ENCODE measurements at regions of chr10 and their contacts with region 1.

Region 1: DNA sequence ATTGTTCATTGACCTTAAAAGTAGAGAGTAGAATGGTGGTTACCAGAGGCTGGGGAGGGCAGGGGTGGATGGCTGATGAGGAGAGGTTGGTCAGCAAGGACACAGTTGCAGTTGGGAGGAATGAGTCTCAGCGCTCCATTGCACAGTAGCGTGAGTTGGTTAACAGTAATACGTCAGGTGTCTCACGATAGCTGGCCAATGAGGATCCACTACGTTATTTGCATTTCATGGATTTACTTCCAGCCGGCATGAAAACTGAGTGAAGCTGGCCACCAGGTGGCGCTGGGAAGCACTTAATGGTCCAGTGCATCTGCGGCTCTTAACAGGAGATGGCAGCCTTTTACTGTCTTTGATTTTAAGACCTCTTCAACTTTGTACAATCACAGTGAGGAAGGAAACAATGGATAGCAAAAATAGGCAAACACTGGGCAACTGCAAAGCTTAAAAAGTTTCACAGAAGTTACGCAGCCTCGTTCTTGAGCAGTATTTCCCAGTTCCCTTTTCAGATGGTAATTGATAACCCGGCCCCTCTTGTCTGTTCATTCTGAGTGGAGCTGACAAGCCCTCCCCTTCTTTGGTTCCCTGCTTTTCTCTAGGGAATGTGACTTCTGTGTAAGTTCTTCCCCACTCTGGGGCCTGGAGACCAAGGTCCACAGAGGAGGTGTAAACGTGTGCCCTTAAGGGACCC is 23.7 kb downstream of the AKR1E2 start:
- DNase-seq: peak; percentile 87
- ATAC-seq: peak; percentile 92
- H3K4me3 ChIP-seq: no peak overlapping the region
- H3K27ac ChIP-seq: peak overlapping the region; percentile 23
- H3K4me1 ChIP-seq: peaks cover 23% of the 10 kb centered on the region
- H3K27me3 ChIP-seq: no peaks in the 10 kb centered on the region
- CTCF ChIP-seq: peak; percentile 99
- EP300 ChIP-seq: peak in 1 of 2 experiments; percentile 35; a peak in 2 of 4 replicates
- POLR2A ChIP-seq: no peak
- RAD21 ChIP-seq: peak; percentile 99

Region 2: DNA sequence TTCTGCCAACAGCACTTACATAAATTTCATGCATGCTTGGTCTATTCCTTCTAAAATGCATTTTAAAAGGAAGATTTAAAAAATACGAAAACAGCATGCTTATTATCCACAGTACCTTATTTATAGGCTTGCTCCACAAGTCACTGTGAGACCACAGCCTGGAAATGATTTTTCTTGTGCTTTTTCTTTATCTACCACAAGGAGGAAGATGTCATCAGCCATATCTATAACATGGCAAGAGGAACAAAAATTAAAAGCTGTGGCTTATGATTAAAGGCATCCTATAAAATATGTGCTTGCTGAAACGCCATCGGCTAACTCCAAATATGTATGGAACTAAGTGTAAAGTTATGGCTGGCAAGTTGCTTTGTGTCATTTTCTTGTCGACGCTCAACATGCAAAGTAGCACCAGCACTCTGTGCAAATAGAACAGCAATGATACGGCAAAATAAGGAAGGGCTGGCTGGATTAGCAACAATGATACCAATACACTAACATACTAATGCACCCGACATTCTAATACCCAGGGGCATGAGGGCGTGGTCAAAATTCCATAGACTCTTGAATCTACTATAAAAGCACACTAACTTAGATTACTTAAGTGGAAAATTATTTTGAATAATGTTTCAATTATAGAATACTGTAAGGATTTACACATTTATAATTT is 64.9 kb before region 1 on chr10:
- CTCF ChIA-PET with region 1: no interaction called
- POLR2A ChIA-PET with region 1: no interaction called
- in situ Hi-C with region 1: no loop called
- intact Hi-C with region 1: no loop called
- DNase-seq: no peak
- ATAC-seq: no peak
- H3K4me3 ChIP-seq: no peak overlapping the region
- H3K27ac ChIP-seq: no peak overlapping the region
- H3K4me1 ChIP-seq: no peaks in the 10 kb centered on the region
- H3K27me3 ChIP-seq: no peaks in the 10 kb centered on the region; a peak in 3 of 5 replicates
- CTCF ChIP-seq: no peak
- EP300 ChIP-seq: no peak
- POLR2A ChIP-seq: no peak
- RAD21 ChIP-seq: no peak

Region 3: GRCh38 chr10:4947635-4948596 is 98.2 kb after region 1 on chr10:
- CTCF ChIA-PET with region 1: no interaction called
- POLR2A ChIA-PET with region 1: interaction called, 15 read pairs
- in situ Hi-C with region 1: no loop called
- intact Hi-C with region 1: no loop called
- DNase-seq: peak; percentile 100
- ATAC-seq: peak; percentile 91
- H3K4me3 ChIP-seq: peak overlapping the region in 2 of 3 experiments; percentile 5 to 36; a peak in 2 of 6 replicates
- H3K27ac ChIP-seq: peak overlapping the region; percentile 99
- H3K4me1 ChIP-seq: peaks cover 93% of the 10 kb centered on the region
- H3K27me3 ChIP-seq: no peaks in the 10 kb centered on the region
- CTCF ChIP-seq: no peak
- EP300 ChIP-seq: peak; percentile 62 to 97; a peak in 3 of 4 replicates
- POLR2A ChIP-seq: peak; percentile 4 to 65; a peak in 2 of 4 replicates
- RAD21 ChIP-seq: no peak

Region 4: DNA sequence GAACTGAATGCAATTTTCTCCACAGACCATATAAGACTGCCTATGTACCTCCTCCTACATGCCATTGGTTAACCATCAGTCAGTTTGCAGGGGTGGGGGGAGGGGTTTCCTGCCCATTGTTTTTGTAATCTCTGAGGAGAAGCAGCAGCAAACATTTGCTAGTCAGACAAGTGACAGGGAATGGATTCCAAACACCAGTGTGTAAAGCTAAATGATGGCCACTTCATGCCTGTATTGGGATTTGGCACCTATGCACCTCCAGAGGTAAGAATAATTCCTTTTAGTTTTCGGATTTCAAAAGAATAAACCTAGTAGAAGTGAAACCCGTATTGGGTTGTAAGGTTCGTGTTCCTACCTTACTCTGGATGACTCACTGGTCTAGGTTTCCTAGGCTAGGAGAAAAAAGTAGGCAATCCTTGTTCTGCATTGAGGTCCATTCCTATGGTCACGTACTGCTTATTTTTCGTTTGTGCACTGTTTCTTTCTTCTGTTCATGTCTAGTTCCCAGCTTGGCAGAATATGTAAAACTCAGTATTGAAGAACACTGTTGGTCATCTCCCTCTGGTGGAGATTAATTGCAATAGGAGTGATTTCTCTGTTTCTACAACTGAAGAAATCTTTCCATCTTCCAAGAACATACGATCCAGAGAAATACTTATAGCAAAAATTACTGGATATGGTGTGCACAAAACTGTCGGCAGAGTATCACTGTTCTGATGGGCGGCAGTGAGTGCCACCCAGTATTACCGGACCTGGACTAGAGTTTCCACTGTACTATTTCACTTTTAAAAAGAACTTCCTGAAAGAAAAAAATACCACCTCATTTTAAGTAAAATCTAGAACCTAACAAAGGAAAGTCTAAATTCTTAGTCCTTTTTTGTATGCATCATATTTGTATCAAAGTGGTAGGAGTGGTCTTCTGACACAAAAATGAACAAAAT is 244.8 kb after region 1 on chr10 and contains the start of gene AKR1C3:
- CTCF ChIA-PET with region 1: interaction called, 22 read pairs
- POLR2A ChIA-PET with region 1: no interaction called
- in situ Hi-C with region 1: loop called (anchors 10 kb)
- intact Hi-C with region 1: loop called (anchors 2 kb)
- DNase-seq: peak; percentile 78
- ATAC-seq: peak; percentile 84
- H3K4me3 ChIP-seq: peak within 1 kb of the TSS; percentile 66 to 77 (median 71)
- H3K27ac ChIP-seq: peak within 1 kb of the TSS; percentile 83
- H3K4me1 ChIP-seq: peaks cover 53% of the 10 kb centered on the region
- H3K27me3 ChIP-seq: no peaks in the 10 kb centered on the region; a peak in 1 of 5 replicates
- CTCF ChIP-seq: peak; percentile 60
- EP300 ChIP-seq: peak in 1 of 2 experiments; percentile 23; a peak in 1 of 4 replicates
- POLR2A ChIP-seq: peak; percentile 73 to 74
- RAD21 ChIP-seq: peak; percentile 63
- total RNA-seq, gene AKR1C3: 368 and 551 TPM in 2 replicates

Region 5: DNA sequence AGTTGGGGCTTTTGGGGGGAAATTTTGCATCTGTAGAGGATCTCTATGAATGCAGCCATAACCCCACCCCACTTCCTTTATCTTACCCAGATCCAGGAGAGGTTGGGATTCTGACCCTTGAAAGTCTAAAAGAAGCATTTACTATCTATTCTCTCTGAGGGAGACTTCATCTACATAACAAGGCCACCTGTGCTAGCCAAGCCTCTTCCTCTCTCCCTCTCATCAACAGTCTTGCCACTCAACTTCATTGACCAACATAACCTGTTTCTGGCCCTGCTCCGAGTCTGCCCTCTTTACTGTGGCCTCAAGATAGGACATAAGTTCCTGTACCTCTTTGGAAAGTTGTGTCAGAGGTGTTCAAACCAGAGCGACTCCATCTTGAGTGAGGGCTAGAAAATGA is 535.5 kb after region 1 on chr10:
- CTCF ChIA-PET with region 1: interaction called, 23 read pairs
- POLR2A ChIA-PET with region 1: no interaction called
- in situ Hi-C with region 1: loop called (anchors 25 kb)
- intact Hi-C with region 1: loop called (anchors 5 kb)
- DNase-seq: no peak
- ATAC-seq: no peak
- H3K4me3 ChIP-seq: no peak overlapping the region
- H3K27ac ChIP-seq: no peak overlapping the region
- H3K4me1 ChIP-seq: no peaks in the 10 kb centered on the region
- H3K27me3 ChIP-seq: no peaks in the 10 kb centered on the region
- CTCF ChIP-seq: no peak
- EP300 ChIP-seq: no peak
- POLR2A ChIP-seq: no peak
- RAD21 ChIP-seq: no peak

Region 6: GRCh38 chr10:5434017-5434753 is 584.5 kb after region 1 on chr10:
- CTCF ChIA-PET with region 1: interaction called, 25 read pairs
- POLR2A ChIA-PET with region 1: no interaction called
- in situ Hi-C with region 1: no loop called
- intact Hi-C with region 1: loop called (anchors 1 kb)
- DNase-seq: peak; percentile 41
- ATAC-seq: peak; percentile 66; the same call in 2 of the 3 replicates
- H3K4me3 ChIP-seq: no peak overlapping the region
- H3K27ac ChIP-seq: no peak overlapping the region
- H3K4me1 ChIP-seq: peaks cover 17% of the 10 kb centered on the region
- H3K27me3 ChIP-seq: no peaks in the 10 kb centered on the region
- CTCF ChIP-seq: peak; percentile 74
- EP300 ChIP-seq: no peak
- POLR2A ChIP-seq: no peak
- RAD21 ChIP-seq: peak; percentile 59; the same call in 1 of the 2 replicates